H1 (cell line): ENCODE measurements at regions of chr16 and their contacts with region 1.

Region 1: GRCh38 chr16:55323637-55324490 is at the start of gene IRX6:
- DNase-seq: peak; percentile 82 to 93
- H3K4me3 ChIP-seq: peak within 1 kb of the TSS; percentile 32 to 81 (median 50)
- H3K27ac ChIP-seq: no peak within 1 kb of the TSS
- H3K4me1 ChIP-seq: peaks cover 0 to 10% (median 2%) of the 10 kb centered on the region in 4 experiments; a peak in 5 of 7 replicates
- H3K27me3 ChIP-seq: peaks cover 48 to 61% (median 59%) of the 10 kb centered on the region in 4 experiments
- CTCF ChIP-seq: peak; percentile 53 to 85 (median 54)
- EP300 ChIP-seq: no peak
- POLR2A ChIP-seq: no peak
- RAD21 ChIP-seq: peak; percentile 57 to 61
- total RNA-seq, gene IRX6: 0.55 and 0.61 TPM in 2 replicates

Region 2: GRCh38 chr16:55225972-55226542 is 97.8 kb before region 1 on chr16:
- CTCF ChIA-PET with region 1: no interaction called
- POLR2A ChIA-PET with region 1: no interaction called
- DNase-seq: no peak
- H3K4me3 ChIP-seq: no peak overlapping the region
- H3K27ac ChIP-seq: no peak overlapping the region
- H3K4me1 ChIP-seq: peaks cover 0 to 4% (median 0%) of the 10 kb centered on the region in 4 experiments; a peak in 1 of 7 replicates
- H3K27me3 ChIP-seq: no peaks in the 10 kb centered on the region
- CTCF ChIP-seq: no peak
- EP300 ChIP-seq: no peak
- POLR2A ChIP-seq: no peak
- RAD21 ChIP-seq: no peak

Region 3: DNA sequence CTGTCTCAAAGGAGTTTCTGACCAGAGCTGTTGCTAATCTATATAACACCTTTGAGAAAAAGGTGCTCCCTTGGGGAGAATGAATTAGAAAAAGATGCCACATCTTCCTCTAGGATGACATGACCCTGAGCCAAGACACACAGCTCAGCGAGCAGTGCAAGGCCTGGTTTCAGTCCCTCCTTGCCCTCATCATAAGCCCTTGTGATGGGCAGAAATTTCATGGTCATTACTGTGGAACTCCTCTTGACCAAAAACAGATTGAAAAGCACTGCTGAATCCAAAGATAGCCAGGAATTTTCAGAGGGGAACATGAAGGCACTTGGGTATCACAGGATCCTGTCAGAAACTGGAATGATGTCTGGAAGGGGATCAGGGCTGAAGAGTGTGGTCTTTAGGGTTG is 73.9 kb before region 1 on chr16:
- CTCF ChIA-PET with region 1: no interaction called
- POLR2A ChIA-PET with region 1: no interaction called
- DNase-seq: no peak
- H3K4me3 ChIP-seq: no peak overlapping the region
- H3K27ac ChIP-seq: no peak overlapping the region
- H3K4me1 ChIP-seq: peaks cover 0 to 5% (median 3%) of the 10 kb centered on the region in 4 experiments; a peak in 1 of 7 replicates
- H3K27me3 ChIP-seq: no peaks in the 10 kb centered on the region; a peak in 1 of 7 replicates
- CTCF ChIP-seq: no peak
- EP300 ChIP-seq: no peak
- POLR2A ChIP-seq: no peak
- RAD21 ChIP-seq: no peak

Region 4: DNA sequence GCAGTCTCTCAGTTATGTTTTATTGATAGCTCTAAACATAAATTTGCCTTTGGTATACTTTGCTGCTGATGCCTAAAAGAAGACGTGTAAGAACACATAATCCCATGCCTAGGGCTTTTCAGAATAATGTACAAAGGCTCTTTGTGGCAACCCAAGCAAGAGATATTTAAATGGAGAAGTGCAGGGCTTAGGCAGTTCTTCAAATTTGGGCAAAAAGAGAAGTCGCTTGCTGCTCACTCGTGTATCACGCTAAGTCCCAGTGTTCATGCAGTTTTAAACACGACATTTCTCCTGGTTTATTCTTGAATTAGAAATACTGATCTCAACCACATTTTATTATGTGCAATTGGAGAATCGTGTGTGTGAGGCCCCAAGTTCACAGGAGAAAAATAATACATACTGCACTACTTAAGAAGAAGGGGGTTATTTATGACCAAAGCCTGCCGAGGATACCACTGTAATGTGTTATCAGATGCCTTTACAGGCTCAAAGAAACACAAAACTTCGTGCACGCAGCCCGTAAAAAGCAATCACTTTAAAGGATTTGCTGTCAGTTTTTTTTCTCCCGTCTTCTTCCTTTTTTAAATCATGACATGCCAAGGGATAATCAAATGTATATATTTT is 22.4 kb before region 1 on chr16:
- CTCF ChIA-PET with region 1: interaction called, 13 read pairs
- POLR2A ChIA-PET with region 1: no interaction called
- DNase-seq: no peak
- H3K4me3 ChIP-seq: no peak overlapping the region
- H3K27ac ChIP-seq: no peak overlapping the region
- H3K4me1 ChIP-seq: peaks cover 0 to 11% (median 2%) of the 10 kb centered on the region in 4 experiments; a peak in 1 of 7 replicates
- H3K27me3 ChIP-seq: no peaks in the 10 kb centered on the region
- CTCF ChIP-seq: no peak
- EP300 ChIP-seq: no peak
- POLR2A ChIP-seq: no peak
- RAD21 ChIP-seq: no peak

Region 5: DNA sequence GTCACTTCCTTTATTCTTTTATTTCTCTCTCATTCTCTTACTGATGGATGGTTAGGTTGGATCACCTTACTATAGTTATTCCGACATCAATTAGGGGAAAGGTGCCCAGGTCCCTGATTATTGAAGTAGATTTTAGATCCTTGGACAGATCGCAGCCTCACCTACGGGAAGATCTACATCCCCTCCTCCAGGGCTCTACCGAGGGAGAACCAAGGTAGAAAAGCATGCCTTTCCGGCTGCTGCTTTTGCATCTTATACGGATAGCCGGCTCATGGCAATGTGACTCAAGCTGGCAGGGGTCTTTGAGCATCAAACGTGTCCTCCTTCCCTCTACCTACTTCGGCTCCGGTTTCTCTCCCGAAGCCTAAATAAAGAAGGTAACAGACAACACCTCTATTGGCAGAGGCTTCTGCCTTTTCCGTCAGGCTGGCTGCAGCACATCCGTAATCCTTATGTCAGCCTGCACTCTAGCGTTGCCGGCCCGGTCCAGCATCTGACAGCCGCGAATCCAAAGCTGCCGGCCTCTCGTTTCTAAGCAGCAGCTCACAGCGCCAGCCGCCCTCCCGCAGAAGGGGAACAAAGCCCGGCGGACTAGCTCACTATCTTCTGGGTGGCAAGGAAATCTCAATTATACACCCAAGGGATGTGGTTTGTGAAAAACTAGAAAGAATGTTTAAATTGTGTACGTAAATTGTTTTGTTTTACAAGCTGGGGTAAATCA is 47.1 kb after region 1 on chr16:
- CTCF ChIA-PET with region 1: interaction called, 15 read pairs
- POLR2A ChIA-PET with region 1: no interaction called
- DNase-seq: peak; percentile 27 to 74
- H3K4me3 ChIP-seq: peak overlapping the region in 2 of 4 experiments; percentile 27 to 33; a peak in 2 of 8 replicates
- H3K27ac ChIP-seq: no peak overlapping the region
- H3K4me1 ChIP-seq: peaks cover 0 to 8% (median 2%) of the 10 kb centered on the region in 4 experiments; a peak in 2 of 7 replicates
- H3K27me3 ChIP-seq: peaks cover 0 to 4% (median 2%) of the 10 kb centered on the region in 4 experiments; a peak in 4 of 7 replicates
- CTCF ChIP-seq: peak; percentile 59 to 69 (median 67)
- EP300 ChIP-seq: no peak
- POLR2A ChIP-seq: no peak
- RAD21 ChIP-seq: peak; percentile 85 to 87